Activated CD4-positive, alpha-beta T cell treated with anti-CD3 and anti-CD28 coated beads for 36 hours (primary cell): ENCODE measurements at regions of chr11 and their contacts with region 1.

Region 1: DNA sequence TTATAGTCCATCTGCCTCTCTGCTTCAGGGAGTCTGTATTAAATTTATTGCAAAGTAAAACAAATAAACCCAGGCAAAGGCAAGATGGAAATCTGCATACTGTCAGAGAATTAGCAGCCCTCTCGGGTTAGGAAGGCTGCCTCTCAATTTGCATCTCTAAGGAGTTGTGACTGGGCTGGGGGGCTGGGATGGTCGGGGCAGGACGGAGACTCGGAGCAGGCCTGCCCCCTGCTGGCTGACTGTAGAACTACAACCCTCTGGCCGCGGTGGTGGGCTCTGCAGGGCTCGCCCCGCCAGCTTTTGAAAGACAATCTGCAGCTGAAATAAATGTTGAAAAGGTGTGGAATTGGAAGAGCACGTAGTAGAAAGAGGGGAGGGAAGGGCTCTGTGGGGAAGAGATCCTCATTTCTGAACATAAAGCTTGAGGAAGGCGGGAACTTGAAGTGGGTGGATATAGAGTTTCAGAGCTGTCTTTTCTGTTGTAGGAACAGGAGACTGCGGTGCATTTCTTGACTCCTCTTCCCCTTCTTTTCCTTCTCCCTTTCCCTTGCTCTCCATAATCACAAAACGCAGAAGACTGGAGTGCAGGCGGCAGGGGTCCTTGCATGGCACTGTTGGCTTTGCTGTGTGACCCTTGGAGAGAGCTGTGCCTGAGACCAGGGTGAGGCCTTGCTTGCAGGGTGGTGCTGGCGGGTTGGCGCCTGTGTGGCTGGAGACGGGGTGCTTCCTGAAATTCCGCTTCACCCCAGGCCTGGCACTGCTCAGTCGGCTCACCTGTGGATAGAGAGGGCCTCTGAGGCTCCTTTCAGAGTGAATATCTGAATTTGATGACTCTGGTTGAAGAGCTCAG is 22.6 kb upstream of the PKNOX2 start:
- DNase-seq: peak; percentile 74
- ATAC-seq: peak; percentile 80
- H3K4me3 Mint-ChIP-seq: no peak overlapping the region
- H3K27ac Mint-ChIP-seq: no peak overlapping the region
- H3K4me1 Mint-ChIP-seq: peaks cover 2% of the 10 kb centered on the region
- H3K27me3 Mint-ChIP-seq: peaks cover 15% of the 10 kb centered on the region

Region 2: DNA sequence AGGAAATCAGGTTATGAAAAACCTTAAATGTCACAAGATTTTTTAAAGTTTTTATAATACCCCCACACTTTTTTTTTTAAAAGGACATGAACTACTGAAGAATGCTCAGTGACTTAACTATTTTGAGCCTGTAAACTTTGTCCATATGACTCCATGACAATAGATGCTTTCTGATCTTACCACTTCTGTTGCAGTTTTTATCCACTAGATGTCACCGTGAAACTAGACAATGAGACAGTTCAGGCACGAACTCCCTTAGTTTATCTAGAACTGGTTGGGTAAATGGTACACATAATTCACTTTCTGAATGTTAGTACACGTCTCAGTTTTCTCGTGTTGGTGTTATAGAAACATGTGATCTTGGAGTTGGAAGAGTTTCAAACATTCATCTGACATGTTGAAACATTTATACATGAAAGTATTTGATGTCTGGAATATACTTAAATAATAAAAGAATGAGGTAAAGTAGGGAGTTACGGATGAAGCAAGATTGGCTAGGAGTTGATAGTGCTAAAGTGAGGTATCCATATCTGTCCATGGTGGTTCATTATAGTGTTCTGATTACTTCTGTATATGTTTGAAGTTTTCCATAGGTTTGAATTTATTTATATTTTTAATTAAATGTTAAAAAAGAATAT is 179.8 kb before region 1 on chr11:
- CTCF ChIA-PET with region 1: interaction called, 32 read pairs
- POLR2A ChIA-PET with region 1: no interaction called
- intact Hi-C with region 1: loop called (anchors 1 kb)
- DNase-seq: no peak
- ATAC-seq: peak; percentile 98
- H3K4me3 Mint-ChIP-seq: no peak overlapping the region
- H3K27ac Mint-ChIP-seq: no peak overlapping the region
- H3K4me1 Mint-ChIP-seq: no peaks in the 10 kb centered on the region
- H3K27me3 Mint-ChIP-seq: no peaks in the 10 kb centered on the region

Region 3: GRCh38 chr11:125091247-125091876 is 50.5 kb before region 1 on chr11:
- CTCF ChIA-PET with region 1: interaction called, 23 read pairs
- POLR2A ChIA-PET with region 1: no interaction called
- intact Hi-C with region 1: loop called in 1 of 2 experiments (anchors 1 kb)
- DNase-seq: no peak
- ATAC-seq: peak; percentile 49
- H3K4me3 Mint-ChIP-seq: no peak overlapping the region
- H3K27ac Mint-ChIP-seq: no peak overlapping the region
- H3K4me1 Mint-ChIP-seq: peaks cover 3% of the 10 kb centered on the region
- H3K27me3 Mint-ChIP-seq: no peaks in the 10 kb centered on the region

Region 4: DNA sequence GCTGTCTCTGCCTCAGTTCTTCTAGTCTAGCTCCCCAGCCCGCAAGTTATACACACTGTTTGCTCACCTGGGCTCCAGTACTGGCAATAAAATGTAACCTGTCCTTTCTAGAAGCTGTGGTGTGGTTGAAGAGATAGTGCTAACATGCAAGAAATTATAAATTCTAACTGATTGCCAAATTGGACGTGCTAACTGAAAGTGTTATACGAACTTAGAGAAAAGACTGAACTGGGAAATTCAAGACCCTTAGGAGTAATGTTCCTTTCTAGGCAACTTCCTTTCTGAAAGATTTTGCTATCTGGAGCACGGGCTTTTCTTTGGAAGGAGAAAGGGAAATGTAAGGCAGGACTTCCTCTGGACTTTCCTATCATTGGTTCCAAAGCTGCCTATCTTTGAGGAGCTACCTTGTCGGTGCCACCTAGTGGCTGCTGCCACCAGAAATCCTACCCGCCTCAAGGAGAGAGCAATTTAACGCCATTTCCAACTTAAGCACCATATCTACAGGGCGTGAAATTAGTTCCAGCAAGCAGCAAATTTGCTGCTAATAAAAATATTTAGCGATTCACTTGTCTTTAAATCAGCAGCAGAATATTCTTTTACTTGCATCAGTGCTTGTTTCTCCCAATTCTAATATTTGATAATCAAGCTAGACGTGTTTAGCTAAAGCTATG is 17.8 kb before region 1 on chr11:
- CTCF ChIA-PET with region 1: interaction called, 47 read pairs
- POLR2A ChIA-PET with region 1: no interaction called
- intact Hi-C with region 1: no loop called
- DNase-seq: peak; percentile 68
- ATAC-seq: peak; percentile 87
- H3K4me3 Mint-ChIP-seq: no peak overlapping the region
- H3K27ac Mint-ChIP-seq: no peak overlapping the region
- H3K4me1 Mint-ChIP-seq: no peaks in the 10 kb centered on the region
- H3K27me3 Mint-ChIP-seq: peaks cover 22% of the 10 kb centered on the region